ENCODE measurements at regions of chr9 and their contacts with region 1.

Region 1: DNA sequence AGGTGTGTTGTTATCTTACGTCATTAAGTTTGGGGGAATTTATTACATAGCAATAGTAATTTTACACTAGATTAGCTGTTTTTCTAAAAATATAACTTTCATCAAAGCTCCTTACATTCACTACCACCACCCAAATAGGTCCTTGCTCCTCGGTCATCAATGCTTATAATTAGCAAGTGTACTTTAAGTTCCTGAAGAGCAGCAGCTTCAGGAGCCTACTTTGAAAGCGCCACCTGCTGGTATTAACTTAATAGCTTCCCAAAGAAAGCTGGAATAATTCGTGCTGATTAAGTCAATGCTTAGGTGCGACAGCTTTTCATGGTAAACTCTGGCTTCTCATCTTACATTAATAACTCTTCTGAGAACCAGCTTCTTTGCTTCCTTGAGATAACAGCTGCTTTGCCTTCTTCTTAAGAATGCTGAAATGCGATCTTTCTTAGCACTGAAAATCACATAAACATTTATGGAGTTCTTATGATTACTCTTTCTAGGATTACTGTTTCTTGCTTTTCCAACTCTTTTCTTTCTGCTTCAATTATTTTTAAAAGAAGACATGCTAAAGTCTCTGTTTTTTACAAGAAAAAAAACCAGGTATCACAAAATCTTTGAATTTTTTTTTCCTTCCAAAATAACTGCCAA is 10.0 kb upstream of the C5 start:
- DNase-seq: peak; percentile 45 to 75 (median 58)
- H3K4me3 ChIP-seq: no peak overlapping the region
- H3K4me3 Mint-ChIP-seq: no peak overlapping the region
- H3K27ac ChIP-seq: no peak overlapping the region
- H3K27ac Mint-ChIP-seq: no peak overlapping the region
- H3K4me1 ChIP-seq: no peaks in the 10 kb centered on the region
- H3K4me1 Mint-ChIP-seq: peaks cover 13% of the 10 kb centered on the region
- H3K27me3 ChIP-seq: no peaks in the 10 kb centered on the region
- H3K27me3 Mint-ChIP-seq: no peaks in the 10 kb centered on the region
- CTCF ChIP-seq: peak; percentile 87

Region 2: DNA sequence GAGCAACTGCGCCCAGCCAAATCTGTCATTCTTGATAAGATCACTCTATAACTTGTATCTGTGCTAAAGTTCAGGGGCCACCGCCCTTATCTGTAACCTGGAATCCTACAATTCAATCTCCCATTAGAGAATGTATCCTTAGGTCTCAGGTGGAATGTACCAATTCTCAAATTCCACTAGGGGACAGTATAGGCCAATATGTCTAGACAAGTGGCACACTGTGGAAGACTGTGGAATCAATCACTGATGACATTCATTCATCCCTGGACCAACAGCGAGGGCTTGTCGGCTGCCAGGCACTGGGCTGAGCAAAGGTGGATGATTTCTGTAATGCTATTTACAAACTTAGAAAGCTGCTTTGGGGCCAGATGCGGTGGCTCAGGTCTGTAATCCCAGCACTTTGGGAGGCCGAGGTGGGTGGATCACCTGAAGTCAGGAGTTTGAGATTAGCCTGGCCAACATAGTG is 317.1 kb before region 1 on chr9:
- intact Hi-C with region 1: loop called in 1 of 2 experiments (anchors 10 kb)
- DNase-seq: peak in 2 of 3 donors; percentile 51 to 57
- H3K4me3 ChIP-seq: no peak overlapping the region
- H3K4me3 Mint-ChIP-seq: no peak overlapping the region
- H3K27ac ChIP-seq: no peak overlapping the region
- H3K27ac Mint-ChIP-seq: peak overlapping the region in 1 of 7 donors; percentile 36
- H3K4me1 ChIP-seq: peaks cover 37 to 42% of the 10 kb centered on the region in 2 donors
- H3K4me1 Mint-ChIP-seq: peaks cover 34% of the 10 kb centered on the region
- H3K27me3 ChIP-seq: no peaks in the 10 kb centered on the region
- H3K27me3 Mint-ChIP-seq: no peaks in the 10 kb centered on the region
- CTCF ChIP-seq: peak; percentile 83

Region 3: GRCh38 chr9:120755827-120756434 is 304.2 kb before region 1 on chr9:
- intact Hi-C with region 1: loop called in 1 of 2 experiments (anchors 5 kb)
- DNase-seq: peak in 2 of 3 donors; percentile 57 to 70
- H3K4me3 ChIP-seq: no peak overlapping the region
- H3K4me3 Mint-ChIP-seq: no peak overlapping the region
- H3K27ac ChIP-seq: peak overlapping the region in 1 of 2 donors; percentile 80
- H3K27ac Mint-ChIP-seq: peak overlapping the region in 5 of 7 donors; percentile 25 to 90 (median 87)
- H3K4me1 ChIP-seq: peaks cover 45 to 60% of the 10 kb centered on the region in 2 donors
- H3K4me1 Mint-ChIP-seq: peaks cover 60% of the 10 kb centered on the region
- H3K27me3 ChIP-seq: no peaks in the 10 kb centered on the region
- H3K27me3 Mint-ChIP-seq: no peaks in the 10 kb centered on the region
- CTCF ChIP-seq: peak; percentile 97